ENCODE measurements at regions of chr5 and their contacts with region 1.

Region 1: DNA sequence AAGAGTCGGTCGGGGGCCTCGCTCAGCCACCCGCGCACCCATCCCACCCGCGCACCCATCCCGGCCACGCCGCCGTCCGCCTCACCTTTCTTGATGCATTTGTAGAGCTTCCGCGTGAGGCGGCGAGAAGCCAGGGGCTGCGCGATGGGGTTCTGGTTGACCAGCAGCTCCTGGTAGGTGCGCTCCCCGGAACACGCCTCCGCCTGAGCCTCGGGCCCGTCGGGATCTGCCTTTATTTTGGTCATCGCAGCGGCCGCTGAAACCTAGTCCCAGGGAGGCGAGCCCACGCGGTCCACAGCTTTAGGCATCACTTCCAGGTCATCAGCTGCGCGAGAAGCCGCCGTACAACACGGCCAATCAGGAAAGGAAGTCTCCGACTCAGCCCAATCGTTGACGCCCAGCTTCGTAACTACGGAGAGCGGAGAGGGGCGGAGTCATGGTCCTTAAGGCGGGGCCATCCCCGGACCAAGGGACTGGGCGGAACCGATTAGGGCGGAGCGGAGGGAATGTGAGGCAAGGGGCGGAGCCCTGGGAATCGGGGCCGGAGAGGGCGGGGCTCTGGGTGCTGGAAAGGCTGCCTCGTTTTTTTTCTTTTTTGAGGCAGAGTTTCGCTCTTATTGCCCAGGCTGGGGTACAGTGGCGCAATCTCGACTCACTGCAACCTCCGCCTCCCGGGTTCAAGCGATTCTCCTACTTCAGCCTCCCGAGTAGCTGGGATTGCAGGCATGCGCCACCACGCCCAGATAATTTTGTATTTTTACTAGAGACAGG is at the start of gene NHP2:
- DNase-seq: peak; percentile 89 to 98 (median 96)
- ATAC-seq: peak; percentile 100
- H3K4me3 ChIP-seq: peak within 1 kb of the TSS; percentile 85
- H3K4me3 Mint-ChIP-seq: peak within 1 kb of the TSS; percentile 88 to 98 (median 96)
- H3K27ac ChIP-seq: peak within 1 kb of the TSS; percentile 72
- H3K27ac Mint-ChIP-seq: peak within 1 kb of the TSS; percentile 55 to 96 (median 88)
- H3K4me1 ChIP-seq: peaks cover 11 to 18% of the 10 kb centered on the region in 2 donors
- H3K4me1 Mint-ChIP-seq: peaks cover 13 to 44% (median 38%) of the 10 kb centered on the region in 7 donors
- H3K27me3 ChIP-seq: no peaks in the 10 kb centered on the region
- H3K27me3 Mint-ChIP-seq: peaks cover 0 to 1% (median 0%) of the 10 kb centered on the region in 5 donors
- total RNA-seq, gene NHP2: 50.5 to 149 (median 70.5) TPM

Region 2: GRCh38 chr5:177554474-177555111 is 599.2 kb before region 1 on chr5 and contains the start of gene FAM193B:
- CTCF ChIA-PET with region 1: no interaction called
- POLR2A ChIA-PET with region 1: no interaction called
- intact Hi-C with region 1: loop called in 1 of 2 experiments (anchors 1 kb)
- DNase-seq: peak; percentile 93 to 96 (median 95)
- ATAC-seq: peak; percentile 99
- H3K4me3 ChIP-seq: peak within 1 kb of the TSS; percentile 68
- H3K4me3 Mint-ChIP-seq: peak within 1 kb of the TSS; percentile 81 to 92 (median 88)
- H3K27ac ChIP-seq: peak within 1 kb of the TSS; percentile 73
- H3K27ac Mint-ChIP-seq: peak within 1 kb of the TSS; percentile 63 to 90 (median 85)
- H3K4me1 ChIP-seq: peaks cover 10 to 17% of the 10 kb centered on the region in 2 donors
- H3K4me1 Mint-ChIP-seq: peaks cover 24 to 43% (median 35%) of the 10 kb centered on the region in 7 donors
- H3K27me3 ChIP-seq: no peaks in the 10 kb centered on the region
- H3K27me3 Mint-ChIP-seq: peaks cover 0 to 4% (median 0%) of the 10 kb centered on the region in 5 donors
- total RNA-seq, gene FAM193B: 102 to 275 (median 175) TPM

Region 3: DNA sequence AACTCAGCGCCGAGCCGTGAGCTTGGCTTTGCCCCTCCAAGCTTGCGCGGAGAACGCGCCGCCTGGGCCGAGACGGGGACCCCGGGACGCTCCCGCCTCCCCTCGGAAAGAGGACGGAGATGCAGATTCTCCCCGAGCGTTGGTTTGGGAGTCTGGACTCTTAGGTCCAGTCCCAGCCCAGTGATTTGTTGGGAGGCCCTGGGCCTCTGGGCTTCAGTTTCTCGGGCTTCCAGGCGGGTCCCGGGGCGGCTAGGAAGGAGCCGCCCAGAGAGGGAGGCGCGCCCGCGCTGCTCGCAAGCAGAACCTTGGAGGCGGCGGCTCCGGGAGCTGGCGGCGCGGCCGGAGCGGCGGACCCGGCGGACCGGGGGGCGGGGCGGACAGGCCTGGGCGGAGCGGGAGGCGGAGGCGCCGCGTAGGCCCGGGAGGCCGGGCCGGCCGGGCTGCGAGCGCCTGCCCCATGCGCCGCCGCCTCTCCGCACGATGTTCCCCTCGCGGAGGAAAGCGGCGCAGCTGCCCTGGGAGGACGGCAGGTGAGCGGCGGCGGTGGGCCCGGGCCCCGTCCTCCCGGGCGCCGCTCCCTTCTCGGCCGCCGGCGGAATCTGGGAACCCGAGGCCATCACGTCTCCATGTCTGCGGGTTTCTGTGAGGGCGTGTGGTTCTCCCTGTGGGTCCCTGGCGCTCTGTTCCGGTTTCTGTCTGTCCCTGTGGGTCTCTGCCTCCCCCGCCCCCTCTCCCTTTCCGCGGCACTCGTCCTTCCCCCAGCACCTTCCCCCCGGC is 553.8 kb before region 1 on chr5 and contains the start of gene B4GALT7:
- CTCF ChIA-PET with region 1: no interaction called
- POLR2A ChIA-PET with region 1: no interaction called
- intact Hi-C with region 1: loop called in 1 of 2 experiments (anchors 10 kb)
- DNase-seq: peak; percentile 67 to 95 (median 84)
- ATAC-seq: peak; percentile 97
- H3K4me3 ChIP-seq: peak within 1 kb of the TSS; percentile 92
- H3K4me3 Mint-ChIP-seq: peak within 1 kb of the TSS; percentile 88 to 99 (median 96)
- H3K27ac ChIP-seq: peak within 1 kb of the TSS; percentile 78
- H3K27ac Mint-ChIP-seq: peak within 1 kb of the TSS; percentile 86 to 96 (median 90)
- H3K4me1 ChIP-seq: peaks cover 4 to 12% of the 10 kb centered on the region in 2 donors
- H3K4me1 Mint-ChIP-seq: peaks cover 27 to 44% (median 32%) of the 10 kb centered on the region in 7 donors
- H3K27me3 ChIP-seq: no peaks in the 10 kb centered on the region
- H3K27me3 Mint-ChIP-seq: no peaks in the 10 kb centered on the region
- total RNA-seq, gene B4GALT7: 25.4 to 42.2 (median 32.1) TPM

Region 4: GRCh38 chr5:178113199-178113787 is 40.5 kb before region 1 on chr5 and contains the start of gene N4BP3:
- CTCF ChIA-PET with region 1: interaction called, 4 read pairs
- POLR2A ChIA-PET with region 1: interaction called, 3 read pairs
- intact Hi-C with region 1: loop called (anchors 1 to 5 kb)
- DNase-seq: peak; percentile 31 to 89 (median 56)
- ATAC-seq: peak; percentile 73
- H3K4me3 ChIP-seq: peak within 1 kb of the TSS; percentile 50
- H3K4me3 Mint-ChIP-seq: peak within 1 kb of the TSS; percentile 82 to 96 (median 87)
- H3K27ac ChIP-seq: no peak within 1 kb of the TSS
- H3K27ac Mint-ChIP-seq: peak within 1 kb of the TSS in 6 of 9 donors; percentile 10 to 81 (median 68)
- H3K4me1 ChIP-seq: peaks cover 38 to 43% of the 10 kb centered on the region in 2 donors
- H3K4me1 Mint-ChIP-seq: peaks cover 20 to 43% (median 34%) of the 10 kb centered on the region in 7 donors
- H3K27me3 ChIP-seq: no peaks in the 10 kb centered on the region
- H3K27me3 Mint-ChIP-seq: peaks cover 0 to 46% (median 8%) of the 10 kb centered on the region in 5 donors
- total RNA-seq, gene N4BP3: 0.79 to 3.5 (median 2.1) TPM

Region 5: DNA sequence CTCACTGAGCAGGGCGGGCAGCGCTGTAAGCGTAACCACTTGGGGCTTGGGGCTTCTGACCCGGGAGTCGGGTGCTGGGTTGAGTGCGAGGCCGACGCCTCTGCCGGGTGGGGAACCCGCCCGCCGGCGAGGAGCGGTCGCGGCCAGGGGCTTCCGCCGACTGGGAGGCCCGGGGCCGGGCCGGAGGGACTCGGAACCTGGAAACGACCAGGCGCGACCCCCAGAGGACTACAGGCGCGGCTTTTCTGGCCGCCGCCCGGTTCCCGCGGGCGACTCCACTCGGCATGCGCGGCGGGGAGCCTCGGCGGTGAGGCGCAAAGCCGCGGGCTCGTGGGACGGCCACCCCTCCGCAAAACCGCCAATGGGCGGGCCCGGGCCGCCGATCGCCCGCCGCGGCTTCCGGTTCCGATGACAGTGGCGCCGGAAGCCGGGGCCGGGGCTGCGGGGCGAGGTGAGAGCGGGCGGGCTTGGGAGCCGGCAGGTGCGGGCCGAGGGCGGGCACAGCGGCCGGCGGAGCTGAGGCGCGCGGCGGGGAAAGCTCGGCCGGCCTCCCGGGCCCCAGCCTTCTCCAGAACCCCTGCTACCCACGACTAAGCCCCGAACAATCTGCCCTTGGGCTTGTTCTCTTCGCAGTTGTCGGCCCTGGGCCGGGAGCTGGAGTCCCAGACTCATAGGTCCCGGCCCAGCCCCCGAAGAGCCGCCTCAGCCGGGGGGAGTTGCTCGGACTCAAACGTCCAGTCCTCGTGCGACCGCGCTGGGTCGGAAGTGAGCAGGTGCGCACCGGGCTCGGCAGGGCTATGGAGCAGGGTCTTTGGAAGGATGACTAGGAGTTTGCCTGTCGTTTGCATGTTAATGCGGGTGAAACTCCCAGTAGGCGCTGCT is 22.9 kb before region 1 on chr5 and contains the start of gene RMND5B:
- CTCF ChIA-PET with region 1: no interaction called
- POLR2A ChIA-PET with region 1: interaction called, 11 read pairs
- intact Hi-C with region 1: loop called (anchors 1 kb)
- DNase-seq: peak; percentile 72 to 91 (median 79)
- ATAC-seq: peak; percentile 94
- H3K4me3 ChIP-seq: peak within 1 kb of the TSS; percentile 71
- H3K4me3 Mint-ChIP-seq: peak within 1 kb of the TSS; percentile 75 to 95 (median 86)
- H3K27ac ChIP-seq: peak within 1 kb of the TSS; percentile 84
- H3K27ac Mint-ChIP-seq: peak within 1 kb of the TSS; percentile 51 to 97 (median 93)
- H3K4me1 ChIP-seq: peaks cover 5 to 8% of the 10 kb centered on the region in 2 donors
- H3K4me1 Mint-ChIP-seq: peaks cover 16 to 39% (median 27%) of the 10 kb centered on the region in 7 donors
- H3K27me3 ChIP-seq: no peaks in the 10 kb centered on the region
- H3K27me3 Mint-ChIP-seq: peaks cover 0 to 4% (median 0%) of the 10 kb centered on the region in 5 donors
- total RNA-seq, gene RMND5B: 21.0 to 42.7 (median 23.3) TPM

Region 6: GRCh38 chr5:178204182-178204894 is 50.6 kb after region 1 on chr5 and contains the start of gene HNRNPAB:
- CTCF ChIA-PET with region 1: no interaction called
- POLR2A ChIA-PET with region 1: no interaction called
- intact Hi-C with region 1: loop called (anchors 1 to 2 kb)
- DNase-seq: peak; percentile 93 to 98 (median 95)
- ATAC-seq: peak; percentile 92
- H3K4me3 ChIP-seq: peak within 1 kb of the TSS; percentile 94
- H3K4me3 Mint-ChIP-seq: peak within 1 kb of the TSS; percentile 90 to 100 (median 99)
- H3K27ac ChIP-seq: peak within 1 kb of the TSS; percentile 88
- H3K27ac Mint-ChIP-seq: peak within 1 kb of the TSS; percentile 91 to 100 (median 99)
- H3K4me1 ChIP-seq: peaks cover 11 to 25% of the 10 kb centered on the region in 2 donors
- H3K4me1 Mint-ChIP-seq: peaks cover 26 to 35% (median 33%) of the 10 kb centered on the region in 7 donors
- H3K27me3 ChIP-seq: no peaks in the 10 kb centered on the region
- H3K27me3 Mint-ChIP-seq: peaks cover 0 to 2% (median 0%) of the 10 kb centered on the region in 5 donors
- total RNA-seq, gene HNRNPAB: 68.9 to 197 (median 82.6) TPM

Region 7: GRCh38 chr5:179795863-179796833 is 1642.4 kb after region 1 on chr5:
- CTCF ChIA-PET with region 1: no interaction called
- POLR2A ChIA-PET with region 1: no interaction called
- intact Hi-C with region 1: loop called in 1 of 2 experiments (anchors 5 kb)
- DNase-seq: peak; percentile 37 to 81 (median 65)
- ATAC-seq: peak; percentile 84
- H3K4me3 ChIP-seq: peak overlapping the region; percentile 48
- H3K4me3 Mint-ChIP-seq: peak overlapping the region; percentile 40 to 78 (median 64)
- H3K27ac ChIP-seq: peak overlapping the region; percentile 68
- H3K27ac Mint-ChIP-seq: peak overlapping the region in 4 of 9 donors; percentile 17 to 80 (median 33)
- H3K4me1 ChIP-seq: peaks cover 24 to 28% of the 10 kb centered on the region in 2 donors
- H3K4me1 Mint-ChIP-seq: peaks cover 20 to 33% (median 30%) of the 10 kb centered on the region in 7 donors
- H3K27me3 ChIP-seq: no peaks in the 10 kb centered on the region
- H3K27me3 Mint-ChIP-seq: no peaks in the 10 kb centered on the region